ENCODE measurements at regions of chr16 and their contacts with region 1.

Region 1: DNA sequence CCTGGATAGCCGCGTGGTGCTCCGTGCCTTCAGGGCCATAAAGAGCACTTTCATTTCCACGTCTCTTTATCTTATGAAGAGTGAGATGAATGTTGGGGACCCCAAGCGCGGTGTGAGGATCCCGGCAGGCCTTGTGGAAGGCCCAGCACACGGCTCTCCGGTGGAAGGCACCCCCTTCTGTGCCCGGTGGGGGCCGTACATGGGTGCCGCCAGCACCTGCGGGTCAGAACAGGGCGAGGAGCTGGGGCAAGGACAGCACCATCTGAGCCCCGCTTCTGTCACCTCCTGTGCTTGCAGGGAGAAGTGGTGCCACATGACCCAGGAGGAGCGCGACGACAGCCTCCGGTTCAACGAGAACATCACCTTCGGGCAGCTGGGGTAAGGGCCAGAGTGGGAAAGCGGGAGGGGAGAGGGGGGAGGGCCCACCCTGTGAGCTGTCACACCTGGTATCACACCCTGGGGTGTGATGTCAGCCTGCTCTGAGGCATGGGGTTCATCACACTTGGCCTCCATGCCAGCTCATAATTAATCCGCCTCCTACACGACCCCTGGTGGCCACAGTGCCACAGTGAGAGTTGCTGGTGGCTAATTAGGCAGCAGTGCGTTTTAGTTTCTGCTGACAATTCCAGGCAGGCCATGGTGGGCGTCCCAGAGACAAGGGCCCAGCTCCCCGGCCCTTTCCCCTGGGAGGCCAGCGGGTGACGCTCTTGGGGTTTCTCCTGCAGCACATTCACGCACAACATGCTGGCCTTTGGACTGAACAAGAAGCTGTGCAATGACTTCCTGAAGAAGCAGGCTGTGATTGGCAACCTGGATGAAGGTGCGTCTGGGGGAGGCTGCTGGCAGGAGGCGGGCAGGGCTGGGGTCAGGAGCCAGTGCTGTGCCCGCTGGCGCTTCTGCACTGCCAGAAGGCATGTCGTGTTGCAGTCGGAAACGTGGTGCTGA is 25.7 kb downstream of the CIBAR2 start:
- DNase-seq: peak; percentile 88
- ATAC-seq: peak; percentile 91
- H3K4me3 Mint-ChIP-seq: no peak overlapping the region
- H3K27ac Mint-ChIP-seq: no peak overlapping the region
- H3K4me1 Mint-ChIP-seq: peaks cover 9% of the 10 kb centered on the region
- H3K27me3 Mint-ChIP-seq: no peaks in the 10 kb centered on the region

Region 2: DNA sequence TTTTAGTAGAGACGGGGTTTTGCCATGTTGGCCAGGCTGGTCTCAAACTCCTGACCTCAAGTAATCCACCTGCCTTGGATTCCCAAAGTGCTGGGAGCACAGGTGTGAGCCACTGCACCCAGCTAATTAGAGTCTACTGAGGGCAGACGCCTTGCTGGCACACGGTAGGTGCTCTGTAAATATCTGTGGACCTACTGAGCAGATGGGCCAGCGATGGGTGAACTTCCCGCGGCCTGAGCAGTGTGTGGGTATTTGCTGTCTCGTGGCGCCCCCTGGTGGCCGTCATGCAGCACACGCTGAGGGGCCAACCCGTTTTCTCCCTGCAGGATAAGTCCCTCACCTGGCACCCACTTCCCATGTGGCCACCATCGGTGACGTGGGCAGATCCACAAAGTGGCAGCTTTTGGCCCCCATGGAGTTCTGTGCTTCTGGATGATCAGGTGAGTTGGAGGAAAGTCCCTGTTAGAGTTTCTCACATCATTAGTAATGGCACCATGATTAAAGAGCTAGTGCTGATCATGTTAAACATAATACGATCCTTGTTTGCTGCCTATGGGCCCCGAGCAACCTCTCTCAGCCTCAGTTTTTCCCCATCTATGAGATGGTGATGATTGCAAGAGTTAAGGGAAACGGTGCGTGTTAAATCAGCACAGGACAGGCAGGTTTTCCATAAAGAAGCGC is 116.0 kb before region 1 on chr16:
- CTCF ChIA-PET with region 1: interaction called, 23 read pairs
- DNase-seq: peak; percentile 82
- ATAC-seq: peak; percentile 97
- H3K4me3 Mint-ChIP-seq: no peak overlapping the region
- H3K27ac Mint-ChIP-seq: no peak overlapping the region
- H3K4me1 Mint-ChIP-seq: no peaks in the 10 kb centered on the region
- H3K27me3 Mint-ChIP-seq: peaks cover 2% of the 10 kb centered on the region

Region 3: DNA sequence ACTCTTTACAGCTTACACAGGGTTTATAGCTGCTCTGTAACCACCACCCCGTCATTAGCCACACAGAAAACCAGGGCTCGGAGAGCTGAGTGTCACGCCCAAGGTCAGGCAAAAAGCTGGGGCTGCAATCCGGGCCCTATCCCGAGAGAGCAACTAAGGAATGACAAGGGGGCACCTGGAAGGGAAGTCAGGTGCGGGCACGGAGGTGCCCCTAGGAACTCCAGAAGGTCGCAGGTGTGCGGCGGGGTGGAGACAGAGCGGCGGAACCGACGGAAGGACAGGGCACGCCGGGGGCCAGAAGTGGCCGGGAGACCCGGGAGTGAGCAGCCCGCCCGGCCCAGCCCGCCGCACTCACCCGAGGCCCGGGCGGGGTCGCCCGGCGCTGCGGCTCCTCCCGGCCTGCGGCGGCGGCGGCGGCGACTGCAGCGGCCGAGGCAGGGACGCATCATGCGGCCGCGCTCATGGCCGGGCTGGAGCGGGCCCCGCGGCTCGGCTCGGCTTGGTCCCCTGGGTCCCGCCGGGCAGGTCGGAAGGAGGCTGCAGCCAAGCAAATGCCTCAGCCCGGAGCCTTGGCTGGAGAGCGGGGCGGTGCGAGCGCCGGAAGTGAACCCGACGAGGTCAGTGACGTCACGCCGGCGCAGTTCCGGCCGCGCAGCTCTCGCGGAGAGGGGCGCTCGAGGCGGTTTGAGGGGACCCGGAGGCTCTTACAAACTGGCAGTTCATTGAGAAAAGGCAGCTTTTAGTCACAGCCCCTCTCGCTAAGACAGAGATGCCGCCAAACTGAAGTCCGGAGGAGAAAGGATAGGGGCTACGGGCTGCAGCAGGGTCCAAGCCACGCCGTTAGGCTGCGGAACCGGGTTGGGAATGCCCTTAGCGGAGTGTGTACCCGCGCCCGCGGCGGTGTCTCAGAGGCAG is 75.4 kb before region 1 on chr16 and contains the start of gene ZDHHC7:
- CTCF ChIA-PET with region 1: interaction called, 31 read pairs
- DNase-seq: peak; percentile 88
- ATAC-seq: peak; percentile 95
- H3K4me3 Mint-ChIP-seq: peak within 1 kb of the TSS; percentile 91
- H3K27ac Mint-ChIP-seq: peak within 1 kb of the TSS; percentile 98
- H3K4me1 Mint-ChIP-seq: peaks cover 30% of the 10 kb centered on the region
- H3K27me3 Mint-ChIP-seq: peaks cover 5% of the 10 kb centered on the region
- total RNA-seq, gene ZDHHC7: 22.3 to 27.1 TPM

Region 4: GRCh38 chr16:85055503-85056210 is 31.0 kb before region 1 on chr16:
- CTCF ChIA-PET with region 1: interaction called, 18 read pairs
- DNase-seq: peak; percentile 96
- ATAC-seq: peak; percentile 94
- H3K4me3 Mint-ChIP-seq: peak overlapping the region; percentile 57
- H3K27ac Mint-ChIP-seq: peak overlapping the region; percentile 91
- H3K4me1 Mint-ChIP-seq: peaks cover 33% of the 10 kb centered on the region
- H3K27me3 Mint-ChIP-seq: no peaks in the 10 kb centered on the region

Region 5: DNA sequence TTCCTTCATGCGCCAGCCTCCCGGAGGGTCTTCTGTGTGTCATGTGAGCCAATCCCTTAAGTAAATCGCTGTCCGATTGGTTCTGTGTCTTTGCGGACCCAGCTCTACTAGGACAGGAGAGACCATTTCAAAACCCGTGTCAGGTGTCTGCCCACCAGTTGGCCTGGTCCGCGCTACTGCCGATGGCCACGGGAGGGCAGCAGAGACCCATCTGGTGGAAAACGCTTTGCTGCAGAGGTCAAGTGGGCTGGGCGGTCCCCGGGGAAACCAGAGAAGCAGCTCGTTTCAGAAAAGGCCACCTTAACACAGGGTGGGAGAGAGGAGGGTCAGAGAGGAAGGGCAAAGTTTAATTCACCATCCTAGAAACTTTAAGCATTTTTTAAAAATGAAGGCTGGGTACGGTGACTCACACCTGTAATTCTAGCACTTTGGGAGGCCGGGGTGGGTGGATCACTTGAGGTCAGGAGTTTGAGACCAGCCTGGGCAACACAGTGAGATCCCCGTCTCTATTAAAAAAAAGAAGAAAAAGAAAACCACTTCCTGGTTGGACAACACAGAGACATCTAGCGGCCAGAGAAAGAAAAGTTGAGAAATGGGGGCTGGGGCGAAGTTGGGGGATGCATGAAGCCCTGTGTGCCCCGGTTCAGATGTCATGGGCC is 28.4 kb after region 1 on chr16:
- CTCF ChIA-PET with region 1: interaction called, 14 read pairs
- DNase-seq: peak; percentile 90
- ATAC-seq: peak; percentile 95
- H3K4me3 Mint-ChIP-seq: peak overlapping the region; percentile 62
- H3K27ac Mint-ChIP-seq: peak overlapping the region; percentile 84
- H3K4me1 Mint-ChIP-seq: peaks cover 7% of the 10 kb centered on the region
- H3K27me3 Mint-ChIP-seq: no peaks in the 10 kb centered on the region